Naive thymus-derived CD8-positive, alpha-beta T cell (primary cell): ENCODE measurements at regions of chr19 and their contacts with region 1.

Region 1: DNA sequence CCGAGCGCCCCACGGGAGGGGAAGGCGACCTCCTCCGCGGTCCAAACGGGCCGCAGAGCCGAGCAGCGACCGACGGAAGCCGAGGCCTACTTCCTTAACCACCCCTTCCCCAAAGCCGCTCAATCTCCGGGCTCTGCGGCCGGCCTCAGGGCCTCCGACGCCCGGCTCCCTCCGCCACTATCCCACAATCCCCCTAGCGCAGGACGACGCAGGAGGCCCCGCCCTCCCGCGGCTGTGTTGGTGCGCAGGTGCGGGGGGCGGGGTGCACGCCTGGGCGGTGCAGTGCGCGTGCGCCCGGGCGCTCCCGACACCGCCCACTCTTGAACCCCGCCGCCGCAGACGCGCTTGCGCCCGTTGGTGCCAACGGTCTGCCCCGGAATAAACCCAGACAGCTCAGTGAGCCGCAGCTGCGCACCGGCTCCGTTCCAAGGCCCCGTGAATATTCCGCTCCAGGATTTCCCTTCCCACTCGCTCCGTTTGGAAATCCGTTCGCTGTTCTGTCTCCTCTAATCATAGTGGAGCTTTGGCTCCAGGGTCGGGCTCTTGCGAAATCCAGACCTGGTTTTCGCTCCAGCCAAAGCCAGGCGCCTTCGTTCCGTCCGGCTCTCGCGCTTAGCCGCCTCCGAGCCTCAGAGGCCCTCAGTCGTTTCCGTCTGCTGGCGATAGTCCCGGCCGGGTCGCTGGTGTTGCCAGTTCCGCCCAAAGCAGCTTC is at the start of gene PPP6R1:
- DNase-seq: peak; percentile 88 to 99 (median 94)
- ATAC-seq: peak; percentile 77 to 81
- H3K4me3 Mint-ChIP-seq: peak within 1 kb of the TSS; percentile 95 to 99 (median 98)
- H3K27ac Mint-ChIP-seq: peak within 1 kb of the TSS; percentile 98 to 100 (median 99)
- H3K4me1 Mint-ChIP-seq: peaks cover 20 to 51% (median 43%) of the 10 kb centered on the region in 4 donors
- H3K27me3 Mint-ChIP-seq: no peaks in the 10 kb centered on the region
- polyA plus RNA-seq, gene PPP6R1: 57.3 to 131 (median 60.9) TPM

Region 2: GRCh38 chr19:54969647-54970046 is 289.3 kb before region 1 on chr19:
- POLR2A ChIA-PET with region 1: no interaction called
- DNase-seq: no peak
- ATAC-seq: no peak
- H3K4me3 Mint-ChIP-seq: no peak overlapping the region
- H3K27ac Mint-ChIP-seq: peak overlapping the region in 1 of 10 donors; percentile 66
- H3K4me1 Mint-ChIP-seq: peaks cover 3 to 16% (median 14%) of the 10 kb centered on the region in 4 donors
- H3K27me3 Mint-ChIP-seq: peaks cover 0 to 5% (median 0%) of the 10 kb centered on the region in 5 donors

Region 3: GRCh38 chr19:55241143-55242088 is 17.6 kb before region 1 on chr19:
- POLR2A ChIA-PET with region 1: interaction called, 14 read pairs
- DNase-seq: peak in 1 of 10 donors; percentile 58
- ATAC-seq: no peak
- H3K4me3 Mint-ChIP-seq: no peak overlapping the region
- H3K27ac Mint-ChIP-seq: no peak overlapping the region
- H3K4me1 Mint-ChIP-seq: peaks cover 0 to 11% (median 6%) of the 10 kb centered on the region in 4 donors
- H3K27me3 Mint-ChIP-seq: no peaks in the 10 kb centered on the region

Region 4: GRCh38 chr19:55279770-55280643 is 21.0 kb after region 1 on chr19 and contains the start of gene HSPBP1:
- POLR2A ChIA-PET with region 1: interaction called, 142 read pairs
- DNase-seq: peak; percentile 91 to 97 (median 96)
- ATAC-seq: peak; percentile 88 to 89
- H3K4me3 Mint-ChIP-seq: peak within 1 kb of the TSS; percentile 96 to 100 (median 99)
- H3K27ac Mint-ChIP-seq: peak within 1 kb of the TSS; percentile 96 to 100 (median 99)
- H3K4me1 Mint-ChIP-seq: peaks cover 17 to 59% (median 39%) of the 10 kb centered on the region in 4 donors
- H3K27me3 Mint-ChIP-seq: no peaks in the 10 kb centered on the region
- polyA plus RNA-seq, gene HSPBP1: 38.6 to 44.8 (median 42.5) TPM

Region 5: DNA sequence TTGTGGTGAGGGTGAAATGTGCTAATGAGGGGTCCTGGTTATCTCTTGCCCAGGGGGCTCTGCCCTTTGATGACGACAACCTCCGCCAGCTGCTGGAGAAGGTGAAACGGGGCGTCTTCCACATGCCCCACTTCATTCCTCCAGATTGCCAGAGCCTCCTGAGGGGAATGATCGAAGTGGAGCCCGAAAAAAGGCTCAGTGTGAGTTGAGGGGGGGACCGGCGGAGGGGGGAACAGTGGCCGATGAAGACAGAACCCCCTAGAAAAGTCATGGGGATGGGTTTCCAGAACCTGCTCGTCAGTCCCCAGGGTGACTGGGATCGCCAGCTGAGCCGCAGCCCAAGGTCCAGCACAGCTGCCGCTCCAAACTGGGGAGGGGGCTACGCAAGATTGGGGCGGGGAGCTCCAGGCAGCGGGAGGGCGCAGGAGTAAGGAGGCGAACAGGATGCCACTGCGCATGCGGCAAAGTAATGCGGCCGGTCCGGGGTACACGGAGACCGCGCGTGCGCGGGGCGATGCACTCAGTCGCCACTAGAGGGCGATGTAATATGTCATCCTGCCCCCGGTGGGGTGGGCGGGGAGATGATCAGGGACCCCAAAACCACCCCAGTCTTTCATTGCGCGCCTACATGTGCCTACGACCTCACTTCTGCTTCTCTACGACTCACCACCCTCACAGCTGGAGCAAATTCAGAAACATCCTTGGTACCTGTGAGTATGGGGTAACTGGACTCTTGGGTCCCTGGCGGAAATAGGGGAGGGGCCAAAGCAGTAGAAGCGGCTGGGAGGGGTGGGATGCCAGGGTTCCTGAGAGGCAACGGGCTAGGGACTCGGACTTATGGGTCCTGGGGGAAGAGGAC is 42.7 kb after region 1 on chr19:
- POLR2A ChIA-PET with region 1: interaction called, 14 read pairs
- DNase-seq: peak; percentile 91 to 99 (median 94)
- ATAC-seq: peak; percentile 92 to 94
- H3K4me3 Mint-ChIP-seq: peak overlapping the region; percentile 84 to 95 (median 90)
- H3K27ac Mint-ChIP-seq: peak overlapping the region; percentile 73 to 96 (median 92)
- H3K4me1 Mint-ChIP-seq: peaks cover 5 to 14% (median 11%) of the 10 kb centered on the region in 4 donors
- H3K27me3 Mint-ChIP-seq: peaks cover 0 to 3% (median 0%) of the 10 kb centered on the region in 5 donors

Region 6: DNA sequence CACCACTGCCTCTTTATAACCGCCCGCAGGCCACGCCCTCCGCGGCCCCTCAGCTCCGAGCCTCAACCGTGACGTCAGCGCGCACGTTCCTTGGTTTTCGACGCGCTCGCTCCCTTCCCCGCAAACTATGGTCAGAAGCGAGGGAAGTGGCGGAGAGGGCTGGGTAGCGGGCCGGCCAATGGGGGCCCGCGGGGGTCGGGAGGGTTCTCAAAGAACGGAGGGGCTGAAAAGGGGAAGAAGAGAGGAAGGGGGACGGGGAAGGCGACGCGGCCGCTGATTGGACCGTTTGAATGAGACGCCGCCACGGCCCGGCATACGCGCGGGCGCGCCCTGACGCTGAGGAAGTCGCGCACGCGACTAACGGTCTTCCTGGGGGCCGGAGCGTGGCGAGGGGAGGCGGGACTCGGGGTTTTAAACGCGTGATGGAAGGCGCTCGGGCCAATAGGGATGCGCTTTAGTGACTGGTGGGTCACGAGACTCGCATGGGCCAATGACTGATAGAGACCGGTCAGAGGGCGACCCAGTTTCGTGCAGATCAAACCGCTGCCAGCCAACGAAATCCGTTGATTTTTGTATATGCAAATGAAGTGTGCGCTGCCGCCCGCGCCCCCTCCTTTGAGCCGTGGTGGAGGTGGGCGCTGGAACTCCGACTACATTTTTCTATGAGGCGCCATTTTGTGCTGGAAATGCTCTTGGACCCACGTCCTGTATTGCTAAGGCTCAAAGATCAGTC is 149.0 kb after region 1 on chr19:
- POLR2A ChIA-PET with region 1: interaction called, 16 read pairs
- DNase-seq: peak; percentile 94 to 99 (median 97)
- ATAC-seq: peak; percentile 91 to 92
- H3K4me3 Mint-ChIP-seq: peak overlapping the region; percentile 88 to 98 (median 94)
- H3K27ac Mint-ChIP-seq: peak overlapping the region; percentile 93 to 100 (median 99)
- H3K4me1 Mint-ChIP-seq: peaks cover 20 to 39% (median 30%) of the 10 kb centered on the region in 4 donors
- H3K27me3 Mint-ChIP-seq: peaks cover 0 to 3% (median 0%) of the 10 kb centered on the region in 5 donors